ENCODE measurements at regions of chr5 and their contacts with region 1.

Region 1: DNA sequence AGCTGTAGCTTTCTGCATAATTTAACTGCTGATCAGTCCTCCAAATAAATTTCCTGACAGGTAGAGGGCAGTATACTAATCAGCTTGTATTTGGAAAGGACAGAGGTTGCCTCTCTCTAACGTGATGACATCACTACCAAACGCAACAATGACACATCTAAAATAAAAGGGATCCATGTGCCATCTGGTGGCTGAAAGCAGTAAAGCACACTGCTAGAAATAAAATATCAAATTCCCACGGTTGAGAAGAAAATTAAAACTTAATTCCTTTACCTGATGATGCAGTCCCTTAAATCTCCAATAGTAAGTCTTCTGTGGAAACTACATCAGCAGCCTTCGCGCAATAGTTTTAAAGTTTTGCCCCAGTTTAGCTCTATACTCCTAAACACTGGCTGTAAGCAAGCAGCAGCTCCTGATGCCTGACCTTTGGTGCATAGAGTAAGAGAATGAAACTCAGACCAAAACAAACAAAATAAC is 54.5 kb downstream of the DIAPH1 start:
- DNase-seq: peak; percentile 90
- H3K4me3 ChIP-seq: no peak overlapping the region
- H3K27ac ChIP-seq: peak overlapping the region; percentile 23
- H3K27me3 ChIP-seq: no peaks in the 10 kb centered on the region
- CTCF ChIP-seq: peak; percentile 78

Region 2: DNA sequence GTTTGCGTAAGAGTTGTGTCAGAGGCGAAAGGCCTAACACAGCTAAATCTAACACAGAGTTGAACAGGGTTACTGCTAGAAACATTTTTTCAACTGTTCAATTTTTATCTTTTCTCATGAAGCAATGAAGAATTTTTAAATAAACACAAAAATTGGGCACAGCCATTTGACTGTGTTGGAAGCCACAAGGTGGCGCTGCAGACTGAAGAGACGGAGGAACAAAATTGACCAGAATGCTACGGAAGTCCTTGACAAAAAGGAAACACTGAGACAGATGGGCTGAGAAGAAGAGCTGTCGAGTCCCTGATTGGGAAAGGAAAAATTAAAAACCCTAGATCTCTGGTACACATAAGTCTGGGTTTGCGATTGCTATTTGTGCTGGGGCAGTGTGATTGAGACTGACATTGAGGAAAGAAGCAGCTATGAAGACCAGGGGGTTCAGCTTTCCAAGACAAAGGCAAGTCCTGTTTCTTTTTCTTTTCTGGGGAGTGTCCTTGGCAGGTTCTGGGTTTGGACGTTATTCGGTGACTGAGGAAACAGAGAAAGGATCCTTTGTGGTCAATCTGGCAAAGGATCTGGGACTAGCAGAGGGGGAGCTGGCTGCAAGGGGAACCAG is 377.2 kb before region 1 on chr5 and contains the start of gene PCDHB9:
- CTCF ChIA-PET with region 1: interaction called, 13 read pairs
- POLR2A ChIA-PET with region 1: no interaction called
- DNase-seq: no peak
- H3K4me3 ChIP-seq: no peak within 1 kb of the TSS
- H3K27ac ChIP-seq: no peak within 1 kb of the TSS
- H3K27me3 ChIP-seq: no peaks in the 10 kb centered on the region
- CTCF ChIP-seq: no peak
- polyA plus RNA-seq, gene PCDHB9: 0.22 and 0.45 TPM in 2 replicates

Region 3: GRCh38 chr5:141326088-141326854 is 238.0 kb before region 1 on chr5:
- CTCF ChIA-PET with region 1: interaction called, 133 read pairs
- POLR2A ChIA-PET with region 1: interaction called, 8 read pairs
- DNase-seq: peak; percentile 49
- H3K4me3 ChIP-seq: peak overlapping the region; percentile 62
- H3K27ac ChIP-seq: peak overlapping the region; percentile 71
- H3K27me3 ChIP-seq: peaks cover 7% of the 10 kb centered on the region
- CTCF ChIP-seq: peak; percentile 74

Region 4: DNA sequence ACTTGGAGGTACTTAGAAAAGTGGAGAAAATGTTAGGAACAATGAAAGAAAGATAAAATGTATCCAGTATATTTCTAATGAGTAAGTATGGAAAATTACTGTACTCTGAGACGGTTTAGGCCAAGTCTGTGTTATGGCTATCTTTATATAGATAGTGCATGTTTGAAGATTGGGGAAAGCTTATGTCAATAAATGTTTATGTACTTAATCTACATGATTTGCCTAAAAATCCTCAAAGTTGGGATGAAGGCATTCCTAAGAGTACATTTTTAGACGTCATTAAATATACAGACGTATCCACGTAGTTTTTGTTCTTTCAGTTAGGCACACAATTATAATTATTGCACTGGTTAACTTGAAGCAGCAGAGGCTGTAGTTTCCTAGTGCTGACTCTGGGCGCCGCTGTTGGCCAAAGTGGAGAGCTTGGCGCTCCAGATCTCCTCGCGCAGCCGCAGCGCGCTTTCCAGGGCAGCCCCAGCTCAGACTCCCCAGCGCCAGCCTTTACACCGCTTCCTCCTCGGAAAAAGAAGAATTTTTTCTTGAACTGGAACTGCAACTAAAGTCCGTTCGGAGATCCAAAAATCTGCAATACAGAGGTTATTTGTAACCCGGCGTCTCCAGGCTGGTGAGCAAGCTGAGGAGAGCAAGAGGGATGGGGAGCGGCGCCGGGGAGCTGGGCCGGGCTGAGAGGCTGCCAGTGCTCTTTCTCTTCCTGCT is 176.9 kb before region 1 on chr5 and contains the start of gene PCDHGB4:
- CTCF ChIA-PET with region 1: interaction called, 31 read pairs
- POLR2A ChIA-PET with region 1: no interaction called
- DNase-seq: no peak
- H3K4me3 ChIP-seq: peak within 1 kb of the TSS; percentile 31; the same call in 1 of the 2 replicates
- H3K27ac ChIP-seq: no peak within 1 kb of the TSS
- H3K27me3 ChIP-seq: peaks cover 6% of the 10 kb centered on the region
- CTCF ChIP-seq: peak; percentile 43
- polyA plus RNA-seq, gene PCDHGB4: 10.3 and 10.9 TPM in 2 replicates

Region 5: GRCh38 chr5:141430332-141431113 is 133.7 kb before region 1 on chr5 and contains the start of gene PCDHGA12:
- CTCF ChIA-PET with region 1: interaction called, 94 read pairs
- POLR2A ChIA-PET with region 1: no interaction called
- DNase-seq: no peak
- H3K4me3 ChIP-seq: peak within 1 kb of the TSS; percentile 37
- H3K27ac ChIP-seq: peak within 1 kb of the TSS; percentile 52
- H3K27me3 ChIP-seq: no peaks in the 10 kb centered on the region
- CTCF ChIP-seq: peak; percentile 43; the same call in 1 of the 2 replicates
- polyA plus RNA-seq, gene PCDHGA12: 3.4 and 4.3 TPM in 2 replicates

Region 6: GRCh38 chr5:141532726-141533125 is 31.5 kb before region 1 on chr5:
- CTCF ChIA-PET with region 1: interaction called, 95 read pairs
- POLR2A ChIA-PET with region 1: no interaction called
- DNase-seq: no peak
- H3K4me3 ChIP-seq: no peak overlapping the region
- H3K27ac ChIP-seq: no peak overlapping the region
- H3K27me3 ChIP-seq: no peaks in the 10 kb centered on the region
- CTCF ChIP-seq: no peak

Region 7: DNA sequence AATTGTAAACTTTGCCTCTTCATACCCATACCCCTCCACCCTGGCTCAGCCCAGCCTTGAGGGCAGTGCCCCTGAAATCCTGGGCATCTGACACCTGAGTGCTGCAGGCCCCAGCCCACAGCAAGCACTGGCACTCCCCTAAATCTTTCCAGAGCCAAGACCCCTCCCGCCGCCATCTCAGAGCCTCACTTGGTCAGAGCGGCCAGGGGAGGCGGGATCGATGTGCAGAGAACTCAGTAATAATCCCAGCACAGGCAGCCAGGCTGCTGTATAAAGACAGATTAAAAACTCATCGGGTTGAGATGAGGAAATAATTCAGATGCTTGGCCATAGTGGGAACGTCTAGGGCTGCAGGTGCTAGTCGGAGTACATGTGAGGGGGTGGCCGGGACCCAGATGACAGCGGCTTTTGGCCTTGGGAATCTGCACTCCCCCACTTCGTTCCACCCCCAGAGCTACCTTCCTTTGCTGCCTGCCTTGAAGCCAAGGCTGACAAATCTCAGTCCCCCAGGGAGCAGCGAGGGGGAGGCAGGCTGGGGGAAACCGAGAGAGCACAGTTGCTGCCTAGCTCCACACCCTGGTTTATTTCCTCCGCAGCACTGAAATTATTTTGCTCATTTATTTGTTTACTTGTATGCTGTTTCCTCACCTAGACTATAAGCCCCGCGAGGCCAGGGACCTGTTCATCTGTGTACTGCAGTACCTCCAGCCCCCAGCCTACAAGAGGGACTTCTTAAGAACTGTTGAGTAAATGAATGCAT is 137.3 kb after region 1 on chr5:
- CTCF ChIA-PET with region 1: no interaction called
- POLR2A ChIA-PET with region 1: no interaction called
- DNase-seq: no peak
- H3K4me3 ChIP-seq: no peak overlapping the region
- H3K27ac ChIP-seq: no peak overlapping the region
- H3K27me3 ChIP-seq: peaks cover 91% of the 10 kb centered on the region
- CTCF ChIP-seq: no peak

Region 8: DNA sequence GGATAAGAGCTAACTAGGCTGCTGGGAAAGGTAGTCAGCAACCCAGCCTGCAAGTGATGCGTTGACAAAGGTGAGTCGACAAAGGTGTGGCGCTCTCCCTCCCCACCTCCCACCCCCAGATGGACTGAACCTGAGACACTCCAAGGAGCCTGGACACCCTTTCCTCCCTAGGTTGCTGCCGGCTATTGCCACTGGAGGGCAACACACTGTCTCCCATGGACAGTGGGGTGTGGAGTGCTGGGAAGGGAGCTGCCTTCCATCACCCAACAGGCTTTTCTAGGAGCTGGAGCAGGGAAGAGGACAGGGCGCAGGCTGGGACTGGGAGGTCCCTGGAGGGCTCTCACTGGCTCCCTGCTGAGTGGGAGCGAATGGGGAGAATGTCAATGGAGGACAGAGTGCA is 193.1 kb after region 1 on chr5:
- CTCF ChIA-PET with region 1: no interaction called
- POLR2A ChIA-PET with region 1: no interaction called
- DNase-seq: no peak
- H3K4me3 ChIP-seq: no peak overlapping the region
- H3K27ac ChIP-seq: no peak overlapping the region
- H3K27me3 ChIP-seq: peaks cover 64% of the 10 kb centered on the region
- CTCF ChIP-seq: peak; percentile 68

Measured in AG04450 (cell line).